Mammary epithelial cell (primary cell): ENCODE measurements at regions of chr9 and their contacts with region 1.

Region 1: GRCh38 chr9:33202552-33203201 is 35.5 kb upstream of the B4GALT1 start:
- DNase-seq: no peak
- H3K4me3 ChIP-seq: no peak overlapping the region
- H3K27ac ChIP-seq: no peak overlapping the region
- H3K4me1 ChIP-seq: no peaks in the 10 kb centered on the region
- H3K27me3 ChIP-seq: no peaks in the 10 kb centered on the region
- CTCF ChIP-seq: no peak

Region 2: GRCh38 chr9:33147416-33148169 is 55.1 kb before region 1 on chr9:
- CTCF ChIA-PET with region 1: no interaction called
- dilution Hi-C with region 1: loop called (anchors 5 kb)
- in situ Hi-C with region 1: no loop called
- intact Hi-C with region 1: no loop called
- DNase-seq: no peak
- H3K4me3 ChIP-seq: no peak overlapping the region
- H3K27ac ChIP-seq: no peak overlapping the region
- H3K4me1 ChIP-seq: peaks cover 21% of the 10 kb centered on the region
- H3K27me3 ChIP-seq: no peaks in the 10 kb centered on the region
- CTCF ChIP-seq: no peak